Naive thymus-derived CD4-positive, alpha-beta T cell (primary cell): ENCODE measurements at regions of chr3 and their contacts with region 1.

Region 1: GRCh38 chr3:108835101-108835500 is 12.5 kb downstream of the TRAT1 start:
- DNase-seq: peak in 7 of 9 donors; percentile 60 to 85 (median 75)
- ATAC-seq: peak; percentile 94
- H3K4me3 ChIP-seq: peak overlapping the region; percentile 43
- H3K4me3 Mint-ChIP-seq: peak overlapping the region; percentile 85 to 100 (median 92)
- H3K27ac ChIP-seq: peak overlapping the region; percentile 78
- H3K27ac Mint-ChIP-seq: peak overlapping the region; percentile 83 to 100 (median 94)
- H3K4me1 ChIP-seq: peaks cover 69% of the 10 kb centered on the region in 2 donors
- H3K4me1 Mint-ChIP-seq: peaks cover 42 to 96% (median 88%) of the 10 kb centered on the region in 7 donors
- H3K27me3 ChIP-seq: no peaks in the 10 kb centered on the region
- H3K27me3 Mint-ChIP-seq: no peaks in the 10 kb centered on the region

Region 2: DNA sequence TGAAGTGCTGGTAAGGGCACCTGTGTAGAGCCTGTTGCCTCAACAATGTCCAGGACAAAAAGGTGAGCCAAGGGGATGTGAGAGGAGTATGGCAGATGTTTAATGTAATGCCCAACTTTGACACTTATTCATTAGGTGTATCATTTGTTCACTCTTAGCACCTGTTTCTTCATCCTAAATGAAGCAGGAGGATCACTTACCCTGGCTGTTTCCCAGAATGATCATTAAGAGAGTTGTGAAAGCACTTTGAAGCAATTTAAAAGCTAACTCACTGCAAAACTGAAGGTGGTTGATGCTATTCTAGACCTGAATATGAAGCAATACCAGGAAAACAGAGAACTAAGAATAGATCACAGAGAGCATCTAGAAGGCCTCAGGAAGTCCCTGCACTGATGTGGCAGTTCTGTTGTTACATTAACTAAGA is 542.2 kb before region 1 on chr3:
- CTCF ChIA-PET with region 1: no interaction called
- POLR2A ChIA-PET with region 1: no interaction called
- intact Hi-C with region 1: loop called in 1 of 2 experiments (anchors 10 kb)
- DNase-seq: peak in 5 of 9 donors; percentile 26 to 45 (median 33)
- ATAC-seq: peak; percentile 73
- H3K4me3 ChIP-seq: no peak overlapping the region
- H3K4me3 Mint-ChIP-seq: peak overlapping the region in 8 of 10 donors; percentile 0 to 78 (median 37)
- H3K27ac ChIP-seq: peak overlapping the region; percentile 22
- H3K27ac Mint-ChIP-seq: peak overlapping the region in 8 of 9 donors; percentile 7 to 86 (median 60)
- H3K4me1 ChIP-seq: peaks cover 17 to 19% of the 10 kb centered on the region in 2 donors
- H3K4me1 Mint-ChIP-seq: peaks cover 23 to 62% (median 31%) of the 10 kb centered on the region in 7 donors
- H3K27me3 ChIP-seq: no peaks in the 10 kb centered on the region
- H3K27me3 Mint-ChIP-seq: no peaks in the 10 kb centered on the region

Region 3: GRCh38 chr3:108698461-108698860 is 136.6 kb before region 1 on chr3:
- CTCF ChIA-PET with region 1: no interaction called
- POLR2A ChIA-PET with region 1: no interaction called
- intact Hi-C with region 1: no loop called
- DNase-seq: no peak
- ATAC-seq: no peak
- H3K4me3 ChIP-seq: no peak overlapping the region
- H3K4me3 Mint-ChIP-seq: no peak overlapping the region
- H3K27ac ChIP-seq: no peak overlapping the region
- H3K27ac Mint-ChIP-seq: no peak overlapping the region
- H3K4me1 ChIP-seq: no peaks in the 10 kb centered on the region
- H3K4me1 Mint-ChIP-seq: no peaks in the 10 kb centered on the region
- H3K27me3 ChIP-seq: no peaks in the 10 kb centered on the region
- H3K27me3 Mint-ChIP-seq: no peaks in the 10 kb centered on the region

Region 4: DNA sequence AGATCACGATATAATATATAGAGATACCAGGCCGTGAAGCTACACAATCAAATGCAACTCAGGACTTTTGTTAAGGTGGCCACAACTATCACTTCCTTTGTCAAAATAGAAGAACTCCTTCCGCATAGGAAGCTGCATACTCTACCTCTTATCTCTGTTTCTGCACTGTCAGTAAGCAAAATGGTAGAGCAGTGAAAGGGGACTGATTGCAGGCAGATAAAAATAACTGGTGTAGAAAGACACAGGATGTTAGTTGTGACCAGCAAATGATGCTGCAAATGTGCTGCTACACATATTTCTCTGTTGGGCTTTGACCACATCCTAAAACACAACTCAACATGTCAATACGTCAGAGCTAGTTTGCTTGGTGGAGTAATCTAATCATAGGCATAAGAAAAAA is 28.8 kb before region 1 on chr3:
- CTCF ChIA-PET with region 1: interaction called, 6 read pairs
- POLR2A ChIA-PET with region 1: interaction called, 4 read pairs
- intact Hi-C with region 1: loop called (anchors 1 kb)
- DNase-seq: peak in 7 of 9 donors; percentile 64 to 90 (median 83)
- ATAC-seq: peak; percentile 96
- H3K4me3 ChIP-seq: no peak overlapping the region
- H3K4me3 Mint-ChIP-seq: peak overlapping the region; percentile 25 to 70 (median 48)
- H3K27ac ChIP-seq: peak overlapping the region; percentile 20
- H3K27ac Mint-ChIP-seq: peak overlapping the region; percentile 29 to 93 (median 81)
- H3K4me1 ChIP-seq: peaks cover 16 to 18% of the 10 kb centered on the region in 2 donors
- H3K4me1 Mint-ChIP-seq: peaks cover 7 to 32% (median 23%) of the 10 kb centered on the region in 7 donors
- H3K27me3 ChIP-seq: no peaks in the 10 kb centered on the region
- H3K27me3 Mint-ChIP-seq: no peaks in the 10 kb centered on the region

Region 5: GRCh38 chr3:108862865-108863798 is 28.0 kb after region 1 on chr3:
- CTCF ChIA-PET with region 1: interaction called, 3 read pairs
- POLR2A ChIA-PET with region 1: interaction called, 7 read pairs
- intact Hi-C with region 1: loop called in 1 of 2 experiments (anchors 2 kb)
- DNase-seq: peak in 4 of 9 donors; percentile 22 to 38 (median 28)
- ATAC-seq: peak; percentile 63
- H3K4me3 ChIP-seq: no peak overlapping the region
- H3K4me3 Mint-ChIP-seq: peak overlapping the region; percentile 25 to 77 (median 64)
- H3K27ac ChIP-seq: peak overlapping the region; percentile 52
- H3K27ac Mint-ChIP-seq: peak overlapping the region; percentile 64 to 93 (median 83)
- H3K4me1 ChIP-seq: peaks cover 8 to 23% of the 10 kb centered on the region in 2 donors
- H3K4me1 Mint-ChIP-seq: peaks cover 29 to 57% (median 53%) of the 10 kb centered on the region in 7 donors
- H3K27me3 ChIP-seq: no peaks in the 10 kb centered on the region
- H3K27me3 Mint-ChIP-seq: no peaks in the 10 kb centered on the region

Region 6: DNA sequence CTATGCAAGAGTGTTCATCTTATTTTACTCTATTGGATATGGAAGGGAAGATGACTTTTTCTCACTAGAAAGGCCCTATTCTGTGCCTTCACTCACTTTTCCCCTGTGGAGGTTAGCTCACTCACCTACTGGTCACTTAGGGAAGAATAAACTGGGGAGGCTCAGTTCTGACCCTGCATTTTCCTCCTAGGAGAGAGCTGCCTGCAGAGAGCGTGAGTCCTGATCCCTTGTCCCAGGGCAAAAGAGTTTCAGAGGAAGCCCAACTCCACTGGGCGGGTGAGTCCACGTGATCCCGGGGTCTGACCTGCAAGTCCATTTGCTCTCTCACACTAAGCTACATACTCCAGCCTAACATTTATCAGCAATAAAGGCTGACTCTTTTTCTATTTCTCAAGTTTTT is 274.5 kb after region 1 on chr3:
- CTCF ChIA-PET with region 1: no interaction called
- POLR2A ChIA-PET with region 1: no interaction called
- intact Hi-C with region 1: no loop called
- DNase-seq: no peak
- ATAC-seq: no peak
- H3K4me3 ChIP-seq: no peak overlapping the region
- H3K4me3 Mint-ChIP-seq: no peak overlapping the region
- H3K27ac ChIP-seq: no peak overlapping the region
- H3K27ac Mint-ChIP-seq: no peak overlapping the region
- H3K4me1 ChIP-seq: no peaks in the 10 kb centered on the region
- H3K4me1 Mint-ChIP-seq: no peaks in the 10 kb centered on the region
- H3K27me3 ChIP-seq: no peaks in the 10 kb centered on the region
- H3K27me3 Mint-ChIP-seq: peaks cover 5 to 29% (median 17%) of the 10 kb centered on the region in 5 donors